Activated T-helper 1 cell treated with anti-CD3 and anti-CD28 coated beads, Interleukin-12 subunit alpha, Interleukin-12 subunit beta, Interleukin-2, Interleukin-4 antibody, amounts not matched to agents 30 ng/mL and 10 ng/mL and 1 ng/mL, durations not matched to agents 14 hours and 24 hours and 36 hours (primary cell): ENCODE measurements at regions of chr14 and their contacts with region 1.

Region 1: GRCh38 chr14:24690492-24690891 is 56.5 kb upstream of the GZMB start:
- DNase-seq: no peak
- H3K4me3 Mint-ChIP-seq: no peak overlapping the region
- H3K27ac Mint-ChIP-seq: no peak overlapping the region
- H3K4me1 Mint-ChIP-seq: peaks cover 49% of the 10 kb centered on the region
- H3K27me3 Mint-ChIP-seq: peaks cover 2% of the 10 kb centered on the region

Region 2: GRCh38 chr14:23528555-23528954 is 1161.9 kb before region 1 on chr14:
- intact Hi-C with region 1: no loop called
- DNase-seq: no peak
- H3K4me3 Mint-ChIP-seq: no peak overlapping the region
- H3K27ac Mint-ChIP-seq: no peak overlapping the region
- H3K4me1 Mint-ChIP-seq: peaks cover 11% of the 10 kb centered on the region
- H3K27me3 Mint-ChIP-seq: no peaks in the 10 kb centered on the region

Region 3: DNA sequence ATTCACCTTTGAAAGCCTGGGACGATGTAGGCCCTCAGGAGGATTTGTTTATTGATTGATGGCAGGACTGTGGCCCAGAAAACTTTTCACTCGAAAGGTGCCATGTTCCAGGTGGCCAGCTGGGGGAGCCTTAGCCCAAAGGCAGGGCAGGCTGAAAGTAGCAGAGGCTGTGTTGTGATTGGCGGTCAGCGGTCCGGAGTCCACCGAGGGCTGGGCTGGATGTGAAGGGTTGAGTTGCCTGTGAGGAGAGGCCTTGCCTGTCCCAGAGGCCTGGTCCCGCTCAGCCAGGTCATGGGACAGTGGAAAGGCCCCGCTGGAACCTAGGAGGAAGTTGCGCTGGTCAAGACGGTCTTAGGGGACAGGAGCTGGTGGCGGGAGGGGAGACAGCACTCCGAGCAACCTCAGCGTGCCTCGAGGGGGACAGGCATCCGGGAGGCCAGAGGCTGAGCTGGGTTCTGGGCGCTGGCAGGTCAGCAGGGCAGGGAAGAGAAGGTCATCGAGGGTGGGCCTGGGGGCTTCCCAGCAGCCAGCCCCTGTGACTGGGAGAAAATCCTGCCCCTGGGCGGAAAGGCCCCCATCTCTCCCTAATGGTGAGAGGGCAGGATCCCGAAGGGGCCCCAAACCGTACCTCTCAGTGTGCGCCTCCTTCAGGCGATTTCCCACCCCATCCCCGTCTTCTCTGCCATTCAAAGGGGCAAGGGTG is 208.7 kb before region 1 on chr14:
- intact Hi-C with region 1: loop called (anchors 5 kb)
- DNase-seq: peak; percentile 34
- H3K4me3 Mint-ChIP-seq: peak overlapping the region; percentile 61
- H3K27ac Mint-ChIP-seq: peak overlapping the region; percentile 57
- H3K4me1 Mint-ChIP-seq: peaks cover 22% of the 10 kb centered on the region
- H3K27me3 Mint-ChIP-seq: no peaks in the 10 kb centered on the region

Region 4: DNA sequence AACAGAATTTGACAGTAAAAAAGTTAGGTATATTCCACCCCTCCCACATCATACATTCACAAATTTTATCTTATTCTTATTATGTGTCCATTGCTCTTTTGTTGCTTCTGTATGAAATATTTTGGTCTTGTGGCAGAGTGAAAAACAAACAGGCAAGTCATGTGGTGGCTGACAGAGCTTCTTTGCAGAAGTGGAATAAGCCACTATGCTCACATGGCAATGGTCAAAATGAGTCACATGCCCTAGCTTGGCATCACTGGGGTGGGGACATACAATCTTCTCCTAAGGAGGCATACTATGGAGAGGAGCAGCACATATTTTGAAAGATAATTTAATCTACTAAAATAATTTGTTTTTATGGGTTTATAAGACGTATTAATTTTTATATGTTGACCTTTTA is 154.8 kb before region 1 on chr14:
- intact Hi-C with region 1: loop called (anchors 5 kb)
- DNase-seq: no peak
- H3K4me3 Mint-ChIP-seq: no peak overlapping the region
- H3K27ac Mint-ChIP-seq: no peak overlapping the region
- H3K4me1 Mint-ChIP-seq: peaks cover 9% of the 10 kb centered on the region
- H3K27me3 Mint-ChIP-seq: peaks cover 3% of the 10 kb centered on the region

Region 5: GRCh38 chr14:24630872-24631477 is 59.5 kb before region 1 on chr14:
- intact Hi-C with region 1: loop called (anchors 1 kb)
- DNase-seq: no peak
- H3K4me3 Mint-ChIP-seq: peak overlapping the region; percentile 94
- H3K27ac Mint-ChIP-seq: peak overlapping the region; percentile 97
- H3K4me1 Mint-ChIP-seq: peaks cover 70% of the 10 kb centered on the region
- H3K27me3 Mint-ChIP-seq: no peaks in the 10 kb centered on the region

Region 6: DNA sequence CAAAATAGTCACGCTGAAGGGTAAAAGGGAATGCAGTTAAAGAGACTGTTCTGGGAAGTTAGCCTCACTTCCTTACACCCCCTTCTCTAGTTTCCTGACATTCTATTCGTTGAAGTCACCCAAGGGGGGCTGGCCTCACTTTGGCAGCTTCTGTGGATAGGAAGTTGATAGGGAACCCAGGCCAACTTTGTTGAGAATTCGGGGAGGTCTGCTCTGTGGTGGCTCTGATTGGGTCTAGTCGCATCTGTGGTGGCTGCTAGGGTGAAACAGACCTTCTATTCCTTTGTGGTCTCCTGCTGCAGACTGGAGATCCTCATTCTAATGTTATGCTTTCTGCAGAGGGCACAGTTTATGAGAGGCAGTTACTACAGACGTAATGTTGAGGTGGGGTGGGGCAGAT is 27.7 kb before region 1 on chr14:
- intact Hi-C with region 1: no loop called
- DNase-seq: no peak
- H3K4me3 Mint-ChIP-seq: peak overlapping the region; percentile 41
- H3K27ac Mint-ChIP-seq: peak overlapping the region; percentile 60
- H3K4me1 Mint-ChIP-seq: peaks cover 87% of the 10 kb centered on the region
- H3K27me3 Mint-ChIP-seq: no peaks in the 10 kb centered on the region

Region 7: GRCh38 chr14:24673534-24674203 is 16.8 kb before region 1 on chr14:
- intact Hi-C with region 1: loop called (anchors 1 kb)
- DNase-seq: peak; percentile 74
- H3K4me3 Mint-ChIP-seq: peak overlapping the region; percentile 77
- H3K27ac Mint-ChIP-seq: peak overlapping the region; percentile 98
- H3K4me1 Mint-ChIP-seq: peaks cover 89% of the 10 kb centered on the region
- H3K27me3 Mint-ChIP-seq: no peaks in the 10 kb centered on the region

Region 8: DNA sequence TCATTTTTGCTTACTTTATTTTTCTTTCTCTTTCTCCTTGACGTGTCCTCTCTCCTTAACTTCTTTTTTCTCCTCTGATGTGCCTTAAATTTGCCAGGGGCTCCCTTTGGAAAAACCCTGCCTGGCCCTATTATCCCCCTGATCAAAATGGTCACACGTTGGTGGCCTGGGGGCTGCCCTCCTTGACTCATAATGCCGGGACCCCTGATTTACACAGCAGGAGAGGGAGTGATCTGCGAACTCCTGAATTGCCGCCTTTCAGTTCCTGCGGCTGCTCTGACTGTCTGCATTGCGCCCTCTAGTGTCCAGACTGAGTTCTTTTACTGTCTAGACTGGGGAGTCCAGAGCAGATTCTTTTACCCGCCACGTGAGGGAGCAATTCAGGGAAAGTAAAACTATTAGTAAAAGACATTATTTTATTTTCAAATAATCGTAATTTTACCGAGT is 11.7 kb before region 1 on chr14:
- intact Hi-C with region 1: loop called (anchors 1 kb)
- DNase-seq: peak; percentile 77
- H3K4me3 Mint-ChIP-seq: peak overlapping the region; percentile 74
- H3K27ac Mint-ChIP-seq: peak overlapping the region; percentile 94
- H3K4me1 Mint-ChIP-seq: peaks cover 67% of the 10 kb centered on the region
- H3K27me3 Mint-ChIP-seq: no peaks in the 10 kb centered on the region

Region 9: GRCh38 chr14:24710403-24711112 is 20.1 kb after region 1 on chr14:
- intact Hi-C with region 1: loop called (anchors 1 kb)
- DNase-seq: peak; percentile 50
- H3K4me3 Mint-ChIP-seq: no peak overlapping the region
- H3K27ac Mint-ChIP-seq: no peak overlapping the region
- H3K4me1 Mint-ChIP-seq: peaks cover 6% of the 10 kb centered on the region
- H3K27me3 Mint-ChIP-seq: peaks cover 7% of the 10 kb centered on the region

Region 10: DNA sequence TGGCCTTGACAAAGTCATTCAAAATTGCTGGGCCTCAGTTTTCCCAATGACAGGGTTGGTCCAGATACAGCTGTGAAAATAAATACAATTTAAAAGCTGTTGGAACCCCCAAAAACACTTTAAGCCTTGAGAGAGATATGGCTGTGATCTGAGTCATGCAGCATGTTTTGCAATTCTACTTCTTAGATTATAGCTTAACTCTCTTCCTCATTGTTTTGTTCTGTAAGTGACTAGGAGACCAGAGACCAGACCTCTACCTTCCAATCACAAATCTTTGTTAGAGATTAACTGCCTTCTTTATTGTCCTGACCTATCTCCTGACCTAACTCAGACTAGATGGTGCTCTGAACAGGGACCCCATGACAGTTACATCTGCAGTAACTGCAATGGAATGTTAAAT is 161.3 kb after region 1 on chr14:
- intact Hi-C with region 1: no loop called
- DNase-seq: no peak
- H3K4me3 Mint-ChIP-seq: no peak overlapping the region
- H3K27ac Mint-ChIP-seq: no peak overlapping the region
- H3K4me1 Mint-ChIP-seq: no peaks in the 10 kb centered on the region
- H3K27me3 Mint-ChIP-seq: peaks cover 6% of the 10 kb centered on the region